HEK293T (cell line): ENCODE measurements at regions of chr2 and their contacts with region 1.

Region 1: GRCh38 chr2:112482309-112483041 is 519 bp downstream of the TTL start:
- DNase-seq: peak; percentile 43

Region 2: DNA sequence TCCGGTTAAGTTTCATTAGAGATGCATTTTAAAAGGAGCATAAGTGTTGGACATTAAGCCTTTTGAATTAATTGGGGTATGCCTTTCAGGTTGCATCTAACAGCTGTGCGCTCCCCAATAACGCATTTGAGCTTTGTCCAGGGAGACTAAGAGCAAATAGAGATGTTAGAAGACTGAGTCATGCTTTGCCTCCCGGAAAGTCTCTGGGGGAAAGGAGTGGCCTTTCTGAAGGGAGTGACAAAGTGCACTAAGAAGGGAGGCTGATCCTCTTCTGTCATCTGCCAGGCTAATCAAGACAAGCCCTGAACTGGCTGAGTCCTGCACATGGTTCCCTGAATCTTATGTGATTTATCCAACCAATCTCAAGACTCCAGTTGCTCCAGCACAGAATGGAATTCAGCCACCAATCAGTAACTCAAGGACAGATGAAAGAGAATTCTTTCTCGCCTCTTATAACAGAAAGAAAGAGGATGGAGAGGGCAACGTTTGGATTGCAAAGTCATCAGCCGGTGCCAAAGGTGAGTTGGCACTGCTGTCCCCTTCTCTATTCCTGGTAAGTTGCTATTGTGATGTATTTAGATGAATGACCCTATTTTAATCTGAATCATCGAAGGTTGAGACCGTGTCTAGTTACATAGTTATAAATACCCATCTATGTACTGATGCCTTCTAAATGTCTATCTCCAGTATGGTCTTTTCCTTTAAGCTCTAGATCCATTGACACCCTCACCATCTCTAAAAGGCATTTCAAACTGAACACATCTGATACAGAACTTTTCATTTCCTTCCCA is 11.6 kb after region 1 on chr2:
- CTCF ChIA-PET with region 1: interaction called, 3 read pairs
- POLR2A ChIA-PET with region 1: interaction called, 10 read pairs
- DNase-seq: no peak